ENCODE measurements at regions of chr5 and their contacts with region 1.

Region 1: GRCh38 chr5:133868946-133869518 is 99.4 kb downstream of the C5orf15 start:
- DNase-seq: peak in 5 of 6 donors; percentile 56 to 84 (median 75)
- ATAC-seq: peak; percentile 77 to 95 (median 94)
- H3K4me3 ChIP-seq: no peak overlapping the region
- H3K27ac ChIP-seq: no peak overlapping the region
- H3K4me1 ChIP-seq: no peaks in the 10 kb centered on the region
- H3K27me3 ChIP-seq: no peaks in the 10 kb centered on the region
- CTCF ChIP-seq: peak; percentile 48 to 79 (median 64)

Region 2: DNA sequence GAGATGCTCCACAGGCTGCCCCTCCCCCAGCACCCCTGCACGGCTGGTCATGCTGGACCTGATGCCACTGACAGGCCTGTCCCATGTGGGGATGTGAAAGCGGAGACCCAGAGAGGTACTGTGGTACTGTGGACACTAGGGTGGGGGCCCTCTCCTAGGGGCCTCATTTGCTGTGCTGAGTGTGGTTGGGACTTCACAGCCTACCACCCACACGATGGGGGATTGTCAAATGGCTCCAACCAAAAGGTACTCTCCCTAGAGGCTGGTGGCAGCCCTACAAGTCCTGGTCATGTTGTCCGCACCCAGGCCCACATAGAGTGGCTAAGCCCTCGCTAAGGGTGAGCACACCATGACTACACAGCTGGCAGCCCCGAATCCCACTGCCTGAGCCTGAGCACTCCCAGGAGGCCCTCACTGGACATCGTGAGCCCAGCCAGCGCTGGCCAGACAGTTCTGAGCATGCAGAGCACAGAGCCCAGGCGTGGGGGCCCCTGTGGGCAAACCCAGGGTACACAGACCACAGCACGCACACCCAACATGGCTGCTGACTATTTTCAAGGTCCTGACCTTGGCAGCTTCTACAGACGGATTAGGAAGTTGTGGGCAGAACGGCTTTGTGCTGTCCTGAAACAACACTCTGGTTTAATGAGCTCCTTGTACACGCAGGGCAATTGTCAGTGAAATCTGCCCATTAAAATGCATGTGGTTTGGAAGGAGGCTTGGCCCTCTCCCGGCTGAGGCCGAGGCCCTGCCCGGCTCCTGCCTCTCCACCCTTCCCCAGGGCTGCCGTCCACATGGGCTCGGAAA is 603.1 kb before region 1 on chr5:
- intact Hi-C with region 1: no loop called
- DNase-seq: no peak
- ATAC-seq: peak in 1 of 4 donors; percentile 12
- H3K4me3 ChIP-seq: no peak overlapping the region
- H3K27ac ChIP-seq: no peak overlapping the region
- H3K4me1 ChIP-seq: peaks cover 0 to 9% (median 0%) of the 10 kb centered on the region in 3 donors
- H3K27me3 ChIP-seq: no peaks in the 10 kb centered on the region
- CTCF ChIP-seq: no peak

Region 3: DNA sequence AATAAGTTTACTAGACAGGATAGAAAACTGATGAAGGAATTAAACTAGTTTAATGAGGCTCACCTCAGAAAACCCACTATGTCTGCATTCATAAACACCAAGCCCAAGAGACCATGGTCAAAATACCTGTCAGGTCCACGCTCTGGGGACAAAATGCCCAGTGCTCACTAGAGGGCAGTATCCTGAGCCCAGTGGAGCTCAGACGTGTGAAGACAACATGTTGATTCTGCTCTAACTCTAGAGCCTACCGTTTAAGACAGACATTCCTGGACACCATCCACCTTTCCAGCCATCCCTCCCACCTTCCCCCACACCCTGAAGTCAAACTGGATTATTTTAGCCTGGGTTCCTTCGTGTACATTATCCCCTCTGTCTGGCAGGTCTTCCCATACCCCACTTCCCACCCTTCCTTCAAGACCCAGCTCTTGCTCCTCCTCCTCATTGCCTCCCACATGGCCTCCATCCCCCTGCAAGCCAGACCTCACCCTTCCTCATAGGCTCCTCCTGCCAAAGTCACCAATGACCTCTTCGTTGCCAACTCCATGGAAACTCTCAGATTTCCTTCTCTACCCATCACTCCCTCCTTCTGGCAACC is 114.4 kb before region 1 on chr5:
- intact Hi-C with region 1: loop called in 2 of 3 experiments (anchors 10 kb)
- DNase-seq: peak in 4 of 6 donors; percentile 18 to 57 (median 29)
- ATAC-seq: peak in 3 of 4 donors; percentile 78 to 90 (median 86)
- H3K4me3 ChIP-seq: no peak overlapping the region
- H3K27ac ChIP-seq: no peak overlapping the region
- H3K4me1 ChIP-seq: no peaks in the 10 kb centered on the region
- H3K27me3 ChIP-seq: no peaks in the 10 kb centered on the region
- CTCF ChIP-seq: peak; percentile 32 to 50 (median 44)